HepG2 (cell line): ENCODE measurements at regions of chr11 and their contacts with region 1.

Region 1: DNA sequence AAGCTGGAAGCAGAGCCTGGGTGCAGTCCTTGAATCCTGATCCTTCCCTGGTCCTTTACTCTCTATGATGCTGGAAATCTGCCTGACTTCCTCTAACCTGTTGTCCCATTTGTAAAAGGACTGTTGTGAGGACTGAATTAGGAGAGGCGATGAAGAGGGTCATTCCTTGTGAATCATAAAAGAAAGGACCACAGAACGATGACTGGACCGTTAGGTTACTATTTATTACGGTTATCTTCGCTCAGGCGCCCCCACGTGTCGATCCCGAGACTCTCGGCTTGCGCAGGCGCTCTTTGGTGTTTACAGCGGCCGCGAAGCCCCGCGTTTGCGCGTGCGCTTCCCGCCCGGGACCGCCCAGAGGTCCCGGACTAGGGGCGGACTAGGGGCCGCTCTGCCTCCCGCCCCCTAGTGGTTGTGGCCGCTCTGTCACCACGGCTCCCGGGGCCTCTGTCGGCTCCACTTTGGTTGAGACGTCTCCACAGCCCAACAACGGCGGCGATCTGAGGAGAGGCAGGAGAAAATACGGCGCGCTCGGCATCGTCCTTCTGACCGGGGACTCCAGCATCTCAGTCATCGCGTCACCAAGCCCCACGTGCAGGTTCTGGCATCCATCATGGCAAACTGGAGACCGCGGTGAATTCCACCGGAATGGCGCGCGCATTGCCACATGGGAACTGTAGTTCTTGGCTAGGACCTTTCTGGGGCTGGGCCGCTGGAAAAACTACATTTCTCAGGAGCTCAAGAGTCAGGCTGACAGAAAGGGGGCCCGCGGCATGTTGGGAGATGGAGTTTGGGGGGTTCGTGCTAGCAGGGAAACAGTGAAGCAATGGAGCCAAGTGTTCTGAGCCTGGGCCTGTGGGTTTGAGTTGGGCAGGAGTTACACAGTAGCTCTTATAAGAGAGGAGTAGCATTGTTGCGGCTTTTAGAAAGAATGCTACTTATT is at the start of gene STARD10:
- DNase-seq: peak; percentile 90
- ATAC-seq: peak; percentile 87
- H3K4me3 ChIP-seq: peak within 1 kb of the TSS; percentile 71 to 80 (median 76)
- H3K27ac ChIP-seq: peak within 1 kb of the TSS; percentile 65
- H3K4me1 ChIP-seq: peaks cover 55% of the 10 kb centered on the region
- H3K27me3 ChIP-seq: no peaks in the 10 kb centered on the region
- CTCF ChIP-seq: peak; percentile 95
- EP300 ChIP-seq: 0 out of 4 replicates have a peak, but pooled peaks of 1 of the 2 experiments have one; percentile 8
- POLR2A ChIP-seq: peak in 1 of 2 experiments; percentile 31; a peak in 1 of 4 replicates
- RAD21 ChIP-seq: peak; percentile 93
- total RNA-seq, gene STARD10: 248 and 341 TPM in 2 replicates

Region 2: GRCh38 chr11:72724851-72725730 is 68.6 kb before region 1 on chr11:
- CTCF ChIA-PET with region 1: interaction called, 27 read pairs
- POLR2A ChIA-PET with region 1: interaction called, 11 read pairs
- in situ Hi-C with region 1: no loop called
- intact Hi-C with region 1: loop called (anchors 1 kb)
- DNase-seq: peak; percentile 80
- ATAC-seq: peak; percentile 82
- H3K4me3 ChIP-seq: no peak overlapping the region
- H3K27ac ChIP-seq: no peak overlapping the region
- H3K4me1 ChIP-seq: no peaks in the 10 kb centered on the region
- H3K27me3 ChIP-seq: no peaks in the 10 kb centered on the region
- CTCF ChIP-seq: peak; percentile 91
- EP300 ChIP-seq: no peak
- POLR2A ChIP-seq: no peak
- RAD21 ChIP-seq: peak; percentile 92

Region 3: GRCh38 chr11:72752088-72752914 is 41.4 kb before region 1 on chr11 and contains the start of gene ARAP1:
- CTCF ChIA-PET with region 1: interaction called, 10 read pairs
- POLR2A ChIA-PET with region 1: interaction called, 6 read pairs
- in situ Hi-C with region 1: loop called (anchors 5 kb)
- intact Hi-C with region 1: loop called (anchors 1 kb)
- DNase-seq: peak; percentile 68
- ATAC-seq: peak; percentile 60
- H3K4me3 ChIP-seq: peak within 1 kb of the TSS; percentile 77 to 94 (median 88)
- H3K27ac ChIP-seq: peak within 1 kb of the TSS; percentile 83
- H3K4me1 ChIP-seq: peaks cover 56% of the 10 kb centered on the region
- H3K27me3 ChIP-seq: no peaks in the 10 kb centered on the region; a peak in 1 of 5 replicates
- CTCF ChIP-seq: peak; percentile 24
- EP300 ChIP-seq: no peak
- POLR2A ChIP-seq: peak; percentile 25 to 62
- RAD21 ChIP-seq: peak; percentile 27; the same call in 1 of the 2 replicates
- total RNA-seq, gene ARAP1: 55.2 and 55.5 TPM in 2 replicates

Region 4: DNA sequence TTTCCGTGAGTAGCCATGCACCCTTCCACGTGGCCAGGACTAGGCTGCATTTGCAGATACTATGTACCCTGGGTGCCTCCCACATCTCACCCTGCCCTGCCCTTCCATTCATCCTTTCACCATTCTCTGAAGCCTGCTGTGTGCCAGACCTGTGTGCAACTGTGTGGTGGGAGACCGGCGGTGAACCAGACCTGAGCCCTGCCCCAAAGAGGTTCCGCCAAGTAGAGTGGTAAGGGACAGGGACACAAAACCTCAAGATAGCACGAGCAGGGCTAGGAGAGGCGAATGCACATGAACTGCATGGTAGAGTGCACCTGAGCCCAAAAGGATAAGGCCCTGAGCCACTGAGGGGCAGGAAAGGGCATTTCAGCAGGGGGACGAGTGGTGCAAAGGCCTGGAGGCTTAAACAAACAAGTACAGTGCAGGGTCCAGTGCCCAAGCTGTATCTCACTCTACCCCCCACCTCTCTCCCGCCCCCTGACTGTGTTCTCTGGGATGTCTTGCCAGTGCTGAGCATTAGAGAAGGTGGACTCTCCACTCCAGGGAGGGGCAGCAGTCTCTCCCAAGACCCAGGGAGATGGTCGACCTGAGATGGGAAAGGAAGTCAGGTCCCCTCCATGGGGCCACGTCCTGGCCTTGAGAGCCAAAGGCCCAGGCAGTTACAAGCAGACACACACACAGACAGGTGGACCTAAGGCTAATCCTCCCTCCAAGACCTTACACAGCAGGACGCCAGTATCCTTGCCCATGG is 27.4 kb before region 1 on chr11:
- CTCF ChIA-PET with region 1: interaction called, 7 read pairs
- POLR2A ChIA-PET with region 1: interaction called, 24 read pairs
- in situ Hi-C with region 1: no loop called
- intact Hi-C with region 1: loop called (anchors 1 kb)
- DNase-seq: peak; percentile 85
- ATAC-seq: peak; percentile 95
- H3K4me3 ChIP-seq: peak overlapping the region; percentile 29 to 63 (median 31); a peak in 5 of 6 replicates
- H3K27ac ChIP-seq: peak overlapping the region; percentile 88
- H3K4me1 ChIP-seq: peaks cover 56% of the 10 kb centered on the region
- H3K27me3 ChIP-seq: no peaks in the 10 kb centered on the region
- CTCF ChIP-seq: peak; percentile 70
- EP300 ChIP-seq: peak in 1 of 2 experiments; percentile 54; a peak in 1 of 4 replicates
- POLR2A ChIP-seq: no peak; a peak in 1 of 4 replicates
- RAD21 ChIP-seq: peak; percentile 80

Region 5: DNA sequence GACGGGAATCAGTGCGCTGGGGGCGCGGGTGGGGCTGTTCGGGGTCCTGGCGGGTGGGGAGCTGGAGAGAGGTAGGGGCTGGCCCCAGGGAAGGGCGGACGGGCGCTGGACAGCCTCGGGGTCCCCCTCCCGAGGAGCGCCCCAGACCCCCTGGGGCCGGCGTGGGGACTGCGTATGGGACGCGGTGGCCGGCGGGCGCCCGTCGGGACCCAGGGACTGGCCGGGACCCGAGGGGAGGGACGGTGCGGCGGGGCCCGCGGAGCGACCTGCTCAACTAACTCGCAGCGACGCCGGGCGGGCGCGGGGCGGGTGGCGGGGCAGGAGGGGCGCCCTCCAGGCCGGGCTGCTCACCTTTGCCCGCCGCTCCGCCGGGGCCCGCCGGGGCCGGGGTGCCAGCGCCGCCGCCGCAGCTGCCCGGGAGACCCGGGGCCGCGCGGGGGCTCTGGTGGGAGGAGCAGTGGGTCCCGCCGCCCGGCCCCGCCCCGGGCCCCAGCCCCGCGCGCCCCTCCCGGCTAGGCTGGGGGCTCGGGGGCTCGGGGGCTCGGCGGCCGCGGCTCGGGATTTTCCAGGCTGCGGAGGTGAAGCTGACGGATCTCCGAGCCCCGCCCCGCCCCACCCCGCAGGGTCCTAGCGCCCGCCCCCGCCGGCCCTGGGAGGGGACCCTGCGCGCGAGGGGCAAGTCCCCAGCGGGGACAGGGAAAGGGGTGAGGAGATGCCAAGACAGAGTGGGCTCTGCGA is 12.2 kb before region 1 on chr11:
- CTCF ChIA-PET with region 1: interaction called, 6 read pairs
- POLR2A ChIA-PET with region 1: interaction called, 103 read pairs
- in situ Hi-C with region 1: no loop called
- intact Hi-C with region 1: no loop called
- DNase-seq: no peak
- ATAC-seq: peak; percentile 7
- H3K4me3 ChIP-seq: peak overlapping the region; percentile 81 to 88 (median 87)
- H3K27ac ChIP-seq: peak overlapping the region; percentile 79
- H3K4me1 ChIP-seq: peaks cover 90% of the 10 kb centered on the region
- H3K27me3 ChIP-seq: no peaks in the 10 kb centered on the region; a peak in 1 of 5 replicates
- CTCF ChIP-seq: no peak
- EP300 ChIP-seq: no peak; a peak in 1 of 4 replicates
- POLR2A ChIP-seq: no peak
- RAD21 ChIP-seq: no peak

Region 6: GRCh38 chr11:72807021-72807693 is 13.5 kb after region 1 on chr11:
- CTCF ChIA-PET with region 1: no interaction called
- POLR2A ChIA-PET with region 1: interaction called, 22 read pairs
- in situ Hi-C with region 1: no loop called
- intact Hi-C with region 1: loop called (anchors 2 kb)
- DNase-seq: peak; percentile 72
- ATAC-seq: peak; percentile 79
- H3K4me3 ChIP-seq: no peak overlapping the region
- H3K27ac ChIP-seq: peak overlapping the region; percentile 54
- H3K4me1 ChIP-seq: peaks cover 27% of the 10 kb centered on the region
- H3K27me3 ChIP-seq: no peaks in the 10 kb centered on the region
- CTCF ChIP-seq: no peak
- EP300 ChIP-seq: peak in 1 of 2 experiments; percentile 39; a peak in 1 of 4 replicates
- POLR2A ChIP-seq: no peak
- RAD21 ChIP-seq: no peak

Region 7: DNA sequence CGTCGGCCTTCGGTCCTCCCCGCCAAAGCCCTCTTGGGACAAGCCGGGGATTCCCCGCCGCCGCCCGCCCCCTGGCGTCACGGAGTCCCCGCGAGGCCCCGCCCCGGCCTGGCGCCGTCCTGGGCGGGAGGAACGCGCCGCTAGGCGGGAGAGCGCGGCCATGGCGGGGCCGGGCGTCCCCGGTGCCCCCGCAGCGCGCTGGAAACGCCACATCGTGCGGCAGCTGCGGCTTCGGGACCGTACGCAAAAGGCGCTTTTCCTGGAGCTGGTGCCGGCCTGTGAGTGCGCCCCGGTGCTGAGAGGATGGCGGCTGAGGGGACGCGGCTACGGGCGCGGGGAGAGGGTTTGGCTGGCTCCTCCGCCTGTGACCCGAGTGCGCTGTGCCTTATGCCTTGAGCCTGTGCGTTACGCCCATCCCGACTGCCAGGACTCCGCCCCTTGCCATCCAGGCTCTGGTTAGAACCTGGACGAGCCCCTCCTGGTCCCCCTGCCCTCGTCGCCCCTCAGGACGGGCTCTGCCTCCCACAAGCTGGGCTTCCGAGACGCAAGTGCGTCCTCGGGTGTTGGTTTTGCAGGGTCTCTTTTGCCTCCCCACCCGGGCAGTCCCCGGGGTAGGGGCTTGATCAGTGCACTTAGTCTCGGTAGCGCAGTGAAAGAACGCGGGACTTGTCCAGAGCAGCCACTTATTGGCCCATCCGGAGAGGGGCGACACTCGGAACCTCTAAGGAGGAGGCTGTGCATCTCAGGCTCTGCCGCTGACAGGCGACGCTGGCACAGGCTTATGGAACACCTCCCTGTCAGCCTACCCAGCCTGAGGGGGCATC is 20.8 kb after region 1 on chr11 and contains the start of gene ATG16L2:
- CTCF ChIA-PET with region 1: no interaction called
- POLR2A ChIA-PET with region 1: interaction called, 22 read pairs
- in situ Hi-C with region 1: no loop called
- intact Hi-C with region 1: loop called (anchors 2 kb)
- DNase-seq: peak; percentile 64
- ATAC-seq: peak; percentile 83
- H3K4me3 ChIP-seq: peak within 1 kb of the TSS; percentile 73 to 90 (median 82)
- H3K27ac ChIP-seq: peak within 1 kb of the TSS; percentile 94
- H3K4me1 ChIP-seq: peaks cover 37% of the 10 kb centered on the region
- H3K27me3 ChIP-seq: no peaks in the 10 kb centered on the region; a peak in 1 of 5 replicates
- CTCF ChIP-seq: peak; percentile 34
- EP300 ChIP-seq: 0 out of 4 replicates have a peak, but pooled peaks of 1 of the 2 experiments have one; percentile 9
- POLR2A ChIP-seq: peak; percentile 70 to 78
- RAD21 ChIP-seq: 0 out of 2 replicates have a peak, but pooled peaks have one; percentile 57
- total RNA-seq, gene ATG16L2: 0.79 and 6.2 TPM in 2 replicates